CD8-positive, alpha-beta memory T cell (primary cell): ENCODE measurements at regions of chr19 and their contacts with region 1.

Region 1: GRCh38 chr19:10580979-10581631 is 6.0 kb downstream of the AP1M2 start:
- DNase-seq: peak; percentile 80 to 91 (median 82)
- H3K4me3 ChIP-seq: no peak overlapping the region
- H3K4me3 Mint-ChIP-seq: peak overlapping the region in 3 of 7 donors; percentile 4 to 23 (median 13)
- H3K27ac ChIP-seq: no peak overlapping the region
- H3K27ac Mint-ChIP-seq: peak overlapping the region in 3 of 8 donors; percentile 18 to 82 (median 44)
- H3K4me1 ChIP-seq: peaks cover 5% of the 10 kb centered on the region
- H3K4me1 Mint-ChIP-seq: peaks cover 15 to 26% (median 18%) of the 10 kb centered on the region in 3 donors
- H3K27me3 ChIP-seq: no peaks in the 10 kb centered on the region
- H3K27me3 Mint-ChIP-seq: peaks cover 3 to 5% of the 10 kb centered on the region in 2 donors

Region 2: DNA sequence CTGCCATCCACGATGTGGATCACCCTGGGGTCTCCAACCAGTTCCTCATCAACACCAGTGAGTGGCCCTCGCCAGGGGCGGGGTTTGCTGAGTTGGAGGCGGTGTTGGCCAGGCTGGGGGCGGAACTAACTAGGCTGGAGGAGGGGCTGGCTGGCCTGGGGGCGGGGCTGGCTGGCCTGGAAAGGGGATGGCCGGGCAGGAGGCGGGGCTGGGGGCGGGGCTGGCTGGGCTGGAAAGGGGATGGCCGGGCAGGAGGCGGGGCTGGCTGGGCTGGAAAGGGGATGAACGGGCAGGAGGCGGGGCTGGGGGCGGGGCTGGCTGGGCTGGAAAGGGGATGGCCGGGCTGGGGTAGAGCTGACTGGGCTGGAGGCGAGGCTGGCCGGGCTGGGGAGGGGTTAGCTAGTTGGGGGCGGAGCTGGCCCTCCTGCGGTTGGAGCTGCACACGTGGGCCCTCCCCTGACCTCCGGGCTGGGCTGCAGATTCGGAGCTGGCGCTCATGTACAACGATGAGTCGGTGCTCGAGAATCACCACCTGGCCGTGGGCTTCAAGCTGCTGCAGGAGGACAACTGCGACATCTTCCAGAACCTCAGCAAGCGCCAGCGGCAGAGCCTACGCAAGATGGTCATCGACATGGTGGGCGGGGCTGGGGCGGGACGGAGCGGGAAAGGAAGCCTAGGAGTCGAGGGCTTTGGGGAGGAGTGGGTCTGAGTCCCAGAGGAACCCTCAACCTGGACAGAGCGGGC is 119.9 kb before region 1 on chr19:
- CTCF ChIA-PET with region 1: no interaction called
- POLR2A ChIA-PET with region 1: no interaction called
- DNase-seq: peak; percentile 74 to 85 (median 75)
- H3K4me3 ChIP-seq: peak overlapping the region; percentile 41
- H3K4me3 Mint-ChIP-seq: peak overlapping the region in 5 of 7 donors; percentile 53 to 73 (median 64)
- H3K27ac ChIP-seq: no peak overlapping the region
- H3K27ac Mint-ChIP-seq: peak overlapping the region in 3 of 8 donors; percentile 45 to 75 (median 47)
- H3K4me1 ChIP-seq: peaks cover 7% of the 10 kb centered on the region
- H3K4me1 Mint-ChIP-seq: peaks cover 2 to 10% (median 5%) of the 10 kb centered on the region in 3 donors
- H3K27me3 ChIP-seq: no peaks in the 10 kb centered on the region
- H3K27me3 Mint-ChIP-seq: no peaks in the 10 kb centered on the region

Region 3: GRCh38 chr19:10478903-10479384 is 102.2 kb before region 1 on chr19:
- CTCF ChIA-PET with region 1: interaction called, 10 read pairs
- POLR2A ChIA-PET with region 1: no interaction called
- DNase-seq: peak; percentile 84 to 90 (median 87)
- H3K4me3 ChIP-seq: peak overlapping the region; percentile 46
- H3K4me3 Mint-ChIP-seq: peak overlapping the region; percentile 56 to 74 (median 68)
- H3K27ac ChIP-seq: no peak overlapping the region
- H3K27ac Mint-ChIP-seq: peak overlapping the region in 7 of 8 donors; percentile 63 to 92 (median 85)
- H3K4me1 ChIP-seq: peaks cover 15% of the 10 kb centered on the region
- H3K4me1 Mint-ChIP-seq: peaks cover 10 to 22% (median 12%) of the 10 kb centered on the region in 3 donors
- H3K27me3 ChIP-seq: no peaks in the 10 kb centered on the region
- H3K27me3 Mint-ChIP-seq: no peaks in the 10 kb centered on the region

Region 4: GRCh38 chr19:10533646-10534386 is 47.3 kb before region 1 on chr19:
- CTCF ChIA-PET with region 1: no interaction called
- POLR2A ChIA-PET with region 1: no interaction called
- DNase-seq: no peak
- H3K4me3 ChIP-seq: no peak overlapping the region
- H3K4me3 Mint-ChIP-seq: no peak overlapping the region
- H3K27ac ChIP-seq: no peak overlapping the region
- H3K27ac Mint-ChIP-seq: peak overlapping the region in 1 of 8 donors; percentile 18
- H3K4me1 ChIP-seq: no peaks in the 10 kb centered on the region
- H3K4me1 Mint-ChIP-seq: peaks cover 0 to 3% (median 0%) of the 10 kb centered on the region in 3 donors
- H3K27me3 ChIP-seq: no peaks in the 10 kb centered on the region
- H3K27me3 Mint-ChIP-seq: peaks cover 4 to 20% of the 10 kb centered on the region in 2 donors

Region 5: DNA sequence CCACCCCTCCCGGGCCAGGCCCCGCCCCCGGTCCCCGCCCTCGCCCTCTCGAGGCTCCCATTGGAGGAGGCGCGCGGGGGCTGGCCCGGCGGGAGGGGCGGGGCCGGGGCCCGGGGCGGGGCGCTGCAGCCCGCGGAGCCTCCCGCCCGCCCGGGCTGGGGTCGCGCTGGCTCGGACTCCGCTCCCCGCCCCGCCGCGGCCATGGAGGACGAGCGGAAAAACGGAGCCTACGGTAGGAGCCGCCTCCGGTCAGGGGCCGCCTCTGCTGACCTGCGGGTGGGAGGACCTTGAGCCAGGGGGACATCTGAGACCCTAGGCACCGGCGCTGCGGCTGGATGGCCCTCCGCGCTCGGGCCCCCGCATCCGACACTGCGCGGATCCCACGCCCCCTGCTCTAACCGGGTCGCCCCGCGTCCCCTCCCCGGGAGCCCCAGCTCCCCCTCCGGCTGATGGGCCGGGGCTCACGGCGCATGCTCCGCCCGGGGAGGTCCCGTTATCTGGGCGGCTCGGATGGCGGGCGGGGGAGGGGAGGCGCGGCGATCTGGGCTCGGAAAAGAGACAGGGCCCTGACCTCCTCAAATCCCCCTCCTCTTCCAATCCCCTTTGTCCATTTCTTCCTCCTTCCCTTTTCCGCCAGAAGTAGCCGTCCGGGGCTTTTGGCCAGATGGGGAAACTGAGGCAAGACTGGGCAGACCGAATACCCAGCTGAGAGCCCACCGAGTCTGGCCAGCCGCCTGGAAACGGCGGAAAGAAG is 21.4 kb after region 1 on chr19:
- CTCF ChIA-PET with region 1: interaction called, 76 read pairs
- POLR2A ChIA-PET with region 1: interaction called, 15 read pairs
- DNase-seq: peak; percentile 79 to 90 (median 85)
- H3K4me3 ChIP-seq: peak overlapping the region; percentile 84
- H3K4me3 Mint-ChIP-seq: peak overlapping the region; percentile 97 to 99 (median 99)
- H3K27ac ChIP-seq: peak overlapping the region; percentile 89
- H3K27ac Mint-ChIP-seq: peak overlapping the region; percentile 78 to 99 (median 98)
- H3K4me1 ChIP-seq: peaks cover 22% of the 10 kb centered on the region
- H3K4me1 Mint-ChIP-seq: peaks cover 24 to 42% (median 29%) of the 10 kb centered on the region in 3 donors
- H3K27me3 ChIP-seq: no peaks in the 10 kb centered on the region
- H3K27me3 Mint-ChIP-seq: no peaks in the 10 kb centered on the region

Region 6: GRCh38 chr19:10625777-10626201 is 44.7 kb after region 1 on chr19:
- CTCF ChIA-PET with region 1: interaction called, 12 read pairs
- POLR2A ChIA-PET with region 1: interaction called, 5 read pairs
- DNase-seq: no peak
- H3K4me3 ChIP-seq: no peak overlapping the region
- H3K4me3 Mint-ChIP-seq: no peak overlapping the region
- H3K27ac ChIP-seq: no peak overlapping the region
- H3K27ac Mint-ChIP-seq: peak overlapping the region in 4 of 8 donors; percentile 51 to 92 (median 56)
- H3K4me1 ChIP-seq: peaks cover 24% of the 10 kb centered on the region
- H3K4me1 Mint-ChIP-seq: peaks cover 29 to 41% (median 38%) of the 10 kb centered on the region in 3 donors
- H3K27me3 ChIP-seq: no peaks in the 10 kb centered on the region
- H3K27me3 Mint-ChIP-seq: no peaks in the 10 kb centered on the region

Region 7: DNA sequence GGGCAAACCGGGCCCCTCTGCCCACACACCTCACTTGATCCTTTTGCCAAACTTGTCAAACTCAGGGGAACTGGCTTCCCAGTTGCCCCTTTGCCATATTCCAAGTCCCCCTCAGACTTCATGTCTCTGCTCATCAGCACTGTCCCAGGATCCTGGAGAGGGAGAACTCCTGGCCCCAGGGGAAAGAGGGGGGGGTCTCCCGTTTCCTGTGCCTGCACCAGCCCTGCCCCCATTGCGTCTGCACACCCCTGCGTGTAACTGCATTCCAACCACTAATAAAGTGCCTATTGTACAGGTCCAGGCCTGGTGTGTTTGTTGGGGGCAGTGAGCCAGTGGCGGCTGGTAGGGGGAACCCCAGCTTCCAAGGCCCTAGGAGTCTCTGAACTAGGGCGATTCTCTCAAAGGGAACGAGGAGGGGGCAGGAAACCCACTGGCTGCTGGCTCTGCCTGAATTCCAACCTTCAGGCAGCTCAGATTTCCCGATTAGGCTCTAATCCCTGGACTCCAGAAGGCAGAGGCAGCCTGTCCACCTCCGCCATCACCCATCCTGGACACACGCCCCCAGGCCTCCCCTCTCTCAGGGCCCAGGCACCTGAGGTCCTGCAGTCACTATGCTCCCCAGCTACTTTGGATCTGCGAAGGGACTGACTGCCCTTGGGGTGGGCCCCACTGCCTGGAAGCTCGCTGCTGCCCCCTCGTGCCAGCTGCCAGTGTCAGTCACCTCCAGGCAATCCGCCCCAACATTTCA is 63.3 kb after region 1 on chr19:
- CTCF ChIA-PET with region 1: interaction called, 371 read pairs
- POLR2A ChIA-PET with region 1: interaction called, 24 read pairs
- DNase-seq: peak; percentile 77 to 89 (median 83)
- H3K4me3 ChIP-seq: no peak overlapping the region
- H3K4me3 Mint-ChIP-seq: no peak overlapping the region
- H3K27ac ChIP-seq: no peak overlapping the region
- H3K27ac Mint-ChIP-seq: peak overlapping the region; percentile 21 to 92 (median 78)
- H3K4me1 ChIP-seq: peaks cover 22% of the 10 kb centered on the region
- H3K4me1 Mint-ChIP-seq: peaks cover 16 to 23% (median 16%) of the 10 kb centered on the region in 3 donors
- H3K27me3 ChIP-seq: no peaks in the 10 kb centered on the region
- H3K27me3 Mint-ChIP-seq: peaks cover 0 to 2% of the 10 kb centered on the region in 2 donors

Region 8: GRCh38 chr19:10695401-10696398 is 114.6 kb after region 1 on chr19:
- CTCF ChIA-PET with region 1: interaction called, 90 read pairs
- POLR2A ChIA-PET with region 1: no interaction called
- DNase-seq: peak; percentile 78 to 90 (median 82)
- H3K4me3 ChIP-seq: peak overlapping the region; percentile 43
- H3K4me3 Mint-ChIP-seq: peak overlapping the region; percentile 66 to 88 (median 86)
- H3K27ac ChIP-seq: no peak overlapping the region
- H3K27ac Mint-ChIP-seq: peak overlapping the region in 5 of 8 donors; percentile 44 to 78 (median 64)
- H3K4me1 ChIP-seq: peaks cover 6% of the 10 kb centered on the region
- H3K4me1 Mint-ChIP-seq: peaks cover 15 to 22% (median 16%) of the 10 kb centered on the region in 3 donors
- H3K27me3 ChIP-seq: no peaks in the 10 kb centered on the region
- H3K27me3 Mint-ChIP-seq: peaks cover 5 to 10% of the 10 kb centered on the region in 2 donors

Region 9: DNA sequence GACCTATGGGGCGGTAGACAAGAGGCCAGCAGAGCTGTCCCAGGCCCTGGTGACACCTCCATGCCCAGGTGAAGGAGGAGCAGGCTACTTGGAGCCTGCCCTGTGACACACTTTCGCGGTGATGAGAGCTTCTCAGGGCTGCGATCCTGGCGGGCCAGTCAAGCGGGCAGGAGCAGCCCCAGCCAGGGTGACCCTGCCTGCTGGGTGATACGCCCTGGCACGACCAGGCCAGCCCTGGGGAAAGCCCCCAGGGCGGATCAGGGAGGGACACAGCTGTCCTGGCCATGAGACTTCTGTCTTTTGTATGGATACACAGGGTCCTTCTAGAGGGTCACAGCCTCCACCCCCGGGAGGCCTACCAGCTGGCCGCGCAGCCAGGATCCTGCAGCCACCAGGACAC is 149.8 kb after region 1 on chr19:
- CTCF ChIA-PET with region 1: no interaction called
- POLR2A ChIA-PET with region 1: no interaction called
- DNase-seq: peak in 1 of 5 donors; percentile 8
- H3K4me3 ChIP-seq: peak overlapping the region; percentile 8
- H3K4me3 Mint-ChIP-seq: peak overlapping the region in 4 of 7 donors; percentile 11 to 90 (median 76)
- H3K27ac ChIP-seq: peak overlapping the region; percentile 59
- H3K27ac Mint-ChIP-seq: peak overlapping the region; percentile 91 to 99 (median 98)
- H3K4me1 ChIP-seq: peaks cover 33% of the 10 kb centered on the region
- H3K4me1 Mint-ChIP-seq: peaks cover 49 to 66% (median 54%) of the 10 kb centered on the region in 3 donors
- H3K27me3 ChIP-seq: no peaks in the 10 kb centered on the region
- H3K27me3 Mint-ChIP-seq: no peaks in the 10 kb centered on the region

Region 10: GRCh38 chr19:10752237-10752912 is 171.3 kb after region 1 on chr19:
- CTCF ChIA-PET with region 1: no interaction called
- POLR2A ChIA-PET with region 1: no interaction called
- DNase-seq: no peak
- H3K4me3 ChIP-seq: no peak overlapping the region
- H3K4me3 Mint-ChIP-seq: peak overlapping the region in 1 of 7 donors; percentile 11
- H3K27ac ChIP-seq: peak overlapping the region; percentile 24
- H3K27ac Mint-ChIP-seq: peak overlapping the region; percentile 64 to 100 (median 85)
- H3K4me1 ChIP-seq: peaks cover 90% of the 10 kb centered on the region
- H3K4me1 Mint-ChIP-seq: peaks cover 63 to 95% (median 81%) of the 10 kb centered on the region in 3 donors
- H3K27me3 ChIP-seq: no peaks in the 10 kb centered on the region
- H3K27me3 Mint-ChIP-seq: peaks cover 0 to 2% of the 10 kb centered on the region in 2 donors